ENCODE measurements at regions of chr9 and their contacts with region 1.

Region 1: DNA sequence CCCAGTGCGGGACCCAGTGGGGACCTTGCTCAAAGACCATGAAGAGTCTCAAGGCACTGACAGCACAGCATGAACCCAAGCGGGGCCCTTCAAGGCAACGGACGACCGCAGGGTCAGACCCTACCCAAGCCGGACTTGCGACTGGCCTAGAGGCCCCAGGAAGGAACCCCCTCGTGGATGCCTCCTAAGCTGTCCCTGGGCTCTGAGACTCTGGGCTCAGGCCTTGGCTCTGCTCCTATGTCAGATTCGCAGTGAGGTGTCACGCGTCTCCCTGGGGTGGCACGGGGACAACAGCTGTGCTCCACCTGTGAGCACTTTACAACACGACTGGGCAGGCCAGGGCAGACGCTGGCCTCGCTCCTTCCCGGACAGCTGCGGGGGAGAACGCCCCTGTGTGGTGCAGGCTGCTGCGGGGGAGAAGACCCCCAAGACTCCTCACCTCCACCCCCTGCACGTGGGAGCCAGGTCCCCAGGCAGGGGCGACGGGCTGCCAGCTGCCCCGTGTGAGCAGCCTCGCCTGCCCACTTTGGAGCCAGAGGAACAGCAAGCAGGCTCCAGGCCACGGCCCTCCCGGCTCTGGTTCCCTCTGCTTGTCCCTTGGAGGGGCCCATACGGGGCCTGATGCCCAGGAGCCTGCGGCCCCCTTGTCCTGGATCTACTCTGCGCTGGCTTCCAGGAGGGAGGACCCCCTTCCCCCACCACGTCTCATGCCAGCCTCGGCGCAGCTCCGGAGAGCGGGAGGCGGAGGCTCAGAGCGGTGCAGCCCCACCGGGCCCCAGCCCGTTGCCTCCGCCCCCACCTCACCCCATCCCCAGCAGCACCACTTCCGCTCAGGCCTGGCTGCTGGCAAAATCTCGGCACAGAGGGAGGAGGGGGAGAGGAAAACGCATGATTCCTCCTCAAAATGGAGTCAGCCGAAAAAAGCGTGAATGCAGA is 36.0 kb downstream of the SARDH start:
- DNase-seq: peak; percentile 68
- H3K4me3 Mint-ChIP-seq: peak overlapping the region; percentile 66
- H3K27ac Mint-ChIP-seq: peak overlapping the region; percentile 64
- H3K4me1 Mint-ChIP-seq: peaks cover 35% of the 10 kb centered on the region
- H3K27me3 Mint-ChIP-seq: peaks cover 16% of the 10 kb centered on the region

Region 2: DNA sequence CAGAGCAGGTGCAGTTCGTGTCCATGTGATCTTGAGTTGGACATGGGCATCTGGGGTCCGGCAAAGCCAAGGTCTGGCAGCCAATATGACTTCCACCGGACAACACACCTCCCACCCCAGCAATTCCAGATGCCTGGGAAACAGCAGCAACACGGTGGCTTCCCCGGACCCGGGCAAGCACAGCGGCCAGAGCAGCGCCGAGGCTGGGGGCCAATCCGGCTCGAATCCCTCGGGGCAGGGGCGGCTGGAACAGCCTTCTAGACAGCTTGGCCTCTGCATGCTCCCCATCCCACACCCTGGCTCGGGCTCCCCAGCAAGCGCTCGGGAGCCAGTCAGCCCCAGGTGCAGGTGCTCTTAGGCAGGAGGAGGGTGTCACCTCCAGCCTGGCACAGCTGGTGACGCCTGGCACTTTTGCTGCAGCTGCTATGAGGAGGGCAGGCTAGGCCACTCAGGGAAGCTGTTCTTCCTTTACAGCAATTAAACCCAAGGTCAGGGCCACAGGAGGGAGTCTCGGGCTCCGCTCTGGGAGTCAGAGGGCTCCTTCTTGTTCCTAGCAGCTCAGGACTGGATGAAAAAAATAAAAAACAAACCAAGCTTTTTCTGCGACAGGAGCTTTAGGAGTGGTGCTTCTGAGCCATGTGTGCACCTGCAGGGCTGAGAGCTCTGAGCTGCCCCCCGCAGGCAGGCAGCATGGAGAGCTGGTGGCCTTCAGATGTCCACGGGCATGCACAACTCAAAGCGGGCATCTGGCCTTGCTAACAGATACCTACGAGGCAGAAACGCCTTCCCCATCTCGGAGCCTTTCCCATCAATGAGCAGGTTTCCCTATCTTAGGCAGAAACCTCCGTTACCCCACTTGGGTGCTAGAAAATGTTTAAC is 37.7 kb before region 1 on chr9:
- CTCF ChIA-PET with region 1: no interaction called
- POLR2A ChIA-PET with region 1: no interaction called
- DNase-seq: no peak
- H3K4me3 Mint-ChIP-seq: no peak overlapping the region
- H3K27ac Mint-ChIP-seq: no peak overlapping the region
- H3K4me1 Mint-ChIP-seq: no peaks in the 10 kb centered on the region
- H3K27me3 Mint-ChIP-seq: peaks cover 5% of the 10 kb centered on the region

Region 3: GRCh38 chr9:133677126-133678010 is 24.8 kb before region 1 on chr9:
- CTCF ChIA-PET with region 1: no interaction called
- POLR2A ChIA-PET with region 1: interaction called, 16 read pairs
- DNase-seq: peak; percentile 71
- H3K4me3 Mint-ChIP-seq: no peak overlapping the region
- H3K27ac Mint-ChIP-seq: peak overlapping the region; percentile 82
- H3K4me1 Mint-ChIP-seq: peaks cover 33% of the 10 kb centered on the region
- H3K27me3 Mint-ChIP-seq: no peaks in the 10 kb centered on the region

Region 4: DNA sequence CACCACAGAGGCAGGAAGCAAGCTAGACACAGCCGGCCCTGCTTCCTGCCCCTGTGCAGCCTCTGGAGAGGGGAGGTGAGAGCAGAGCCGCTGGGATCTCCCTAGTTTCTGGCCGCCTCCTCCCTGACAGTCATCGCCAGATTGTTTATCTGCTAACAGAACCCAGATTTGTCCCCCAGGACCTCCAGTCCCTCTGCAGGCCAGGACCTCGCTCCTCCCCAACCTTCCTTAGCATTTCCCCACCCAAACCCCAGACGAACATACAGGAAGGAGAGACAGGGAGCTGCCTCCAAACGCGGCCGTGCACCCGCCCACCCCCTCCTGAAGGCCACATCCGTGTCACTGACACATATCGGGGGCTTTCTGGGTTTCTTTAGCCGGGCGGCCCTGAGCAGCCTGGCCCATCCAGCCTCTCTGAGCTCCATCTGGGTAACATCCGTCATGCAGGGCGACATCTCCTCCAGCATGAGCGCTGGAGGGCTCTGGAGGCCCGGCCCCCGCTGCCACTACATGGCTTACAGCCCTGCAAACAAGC is 18.5 kb before region 1 on chr9:
- CTCF ChIA-PET with region 1: no interaction called
- POLR2A ChIA-PET with region 1: interaction called, 12 read pairs
- DNase-seq: peak; percentile 68
- H3K4me3 Mint-ChIP-seq: peak overlapping the region; percentile 59
- H3K27ac Mint-ChIP-seq: peak overlapping the region; percentile 88
- H3K4me1 Mint-ChIP-seq: peaks cover 18% of the 10 kb centered on the region
- H3K27me3 Mint-ChIP-seq: no peaks in the 10 kb centered on the region

Region 5: DNA sequence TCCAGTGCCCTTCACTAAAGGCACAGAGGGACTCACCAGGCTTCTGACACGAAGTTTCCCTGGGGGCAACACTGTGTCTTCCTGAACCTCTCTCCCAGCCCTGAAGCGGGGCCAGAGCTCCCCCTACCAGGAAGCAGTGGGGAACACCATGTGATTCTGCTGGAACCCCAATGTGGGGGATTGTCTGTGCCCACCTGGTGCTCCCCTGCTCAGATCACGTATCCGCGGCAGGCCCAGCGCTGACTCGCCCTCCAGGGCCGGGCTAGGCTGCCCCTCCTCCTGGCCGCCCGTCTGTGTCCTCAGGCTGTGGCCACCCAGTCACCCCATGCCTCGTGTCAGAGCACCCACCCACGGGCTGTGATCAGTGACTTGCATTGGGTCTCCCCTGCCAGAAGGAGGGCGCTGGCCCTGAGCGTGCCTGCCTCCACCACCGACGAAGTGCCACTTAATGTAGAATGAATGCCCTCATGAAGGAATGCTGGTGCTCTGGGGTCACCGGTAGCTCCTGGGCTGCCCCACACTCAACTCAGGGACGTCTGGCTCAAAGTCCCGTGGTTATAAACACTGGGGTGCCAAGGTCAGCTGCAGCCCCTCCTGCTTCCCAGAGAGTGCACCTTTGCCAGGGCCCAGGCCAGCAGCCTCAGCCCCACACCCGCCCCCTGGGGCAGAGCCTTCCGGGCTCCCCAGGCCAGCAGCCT is 13.9 kb after region 1 on chr9:
- CTCF ChIA-PET with region 1: no interaction called
- POLR2A ChIA-PET with region 1: no interaction called
- DNase-seq: no peak
- H3K4me3 Mint-ChIP-seq: no peak overlapping the region
- H3K27ac Mint-ChIP-seq: no peak overlapping the region
- H3K4me1 Mint-ChIP-seq: no peaks in the 10 kb centered on the region
- H3K27me3 Mint-ChIP-seq: peaks cover 2% of the 10 kb centered on the region

Measured in activated CD4-positive, alpha-beta memory T cell treated with anti-CD3 and anti-CD28 coated beads, Interleukin-2, amount 10 ng/mL, durations not matched to agents 7 days and 5 days (primary cell).